Motor neuron (in vitro differentiated cells): ENCODE measurements at regions of chr14 and their contacts with region 1.

Region 1: DNA sequence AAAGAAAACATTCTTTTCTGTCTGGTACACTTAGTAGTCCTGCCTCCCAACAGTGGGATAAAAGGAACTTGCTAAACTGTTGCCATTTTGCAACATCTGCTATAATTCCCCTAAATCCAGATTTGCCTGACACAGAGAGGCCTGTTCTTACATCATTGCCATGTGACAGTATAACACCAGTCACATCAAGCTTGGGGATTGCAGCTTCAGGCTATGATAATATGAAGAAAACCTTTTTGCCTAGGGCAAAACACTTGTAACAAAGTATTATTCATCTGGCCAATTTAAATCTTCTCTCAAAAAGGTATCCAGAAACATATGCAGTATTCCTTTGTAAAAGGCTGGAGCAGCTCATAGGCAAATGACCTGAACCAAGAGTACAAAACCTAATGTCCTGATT is 80.9 kb upstream of the OTX2 start:
- ATAC-seq: peak in 6 of 8 experiments; percentile 21 to 76 (median 50)
- H3K4me3 ChIP-seq: no peak overlapping the region
- H3K27ac ChIP-seq: no peak overlapping the region
- H3K4me1 ChIP-seq: peaks cover 14 to 15% of the 10 kb centered on the region in 2 donors

Region 2: GRCh38 chr14:56555921-56556570 is 335.2 kb before region 1 on chr14:
- in situ Hi-C with region 1: loop called in 1 of 9 experiments (anchors 25 kb)
- ATAC-seq: peak; percentile 21 to 84 (median 72)
- H3K4me3 ChIP-seq: no peak overlapping the region
- H3K27ac ChIP-seq: no peak overlapping the region
- H3K4me1 ChIP-seq: peaks cover 0 to 12% of the 10 kb centered on the region in 2 donors

Region 3: DNA sequence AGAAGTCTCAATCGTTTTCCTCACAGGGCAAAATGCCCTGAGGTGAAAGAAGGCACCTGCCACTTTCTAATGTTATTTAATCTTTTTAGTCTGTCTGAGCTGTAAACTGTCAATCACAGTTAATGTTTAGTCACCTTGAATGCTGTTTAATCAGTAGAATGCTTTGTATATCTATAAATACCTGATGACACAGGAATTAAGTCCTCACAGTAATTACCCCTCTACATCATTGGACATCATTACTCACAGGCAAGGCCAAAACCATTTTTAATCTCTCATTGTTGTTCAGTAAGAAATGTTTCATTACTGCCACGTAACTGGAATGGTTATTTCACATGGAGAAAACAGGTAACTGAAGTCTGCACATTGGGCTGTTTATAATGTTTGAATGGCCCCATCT is 198.7 kb after region 1 on chr14:
- in situ Hi-C with region 1: no loop called
- ATAC-seq: peak in 2 of 8 experiments; percentile 27 to 61
- H3K4me3 ChIP-seq: no peak overlapping the region
- H3K27ac ChIP-seq: no peak overlapping the region
- H3K4me1 ChIP-seq: no peaks in the 10 kb centered on the region